CD4-positive, alpha-beta memory T cell (primary cell): ENCODE measurements at regions of chr1 and their contacts with region 1.

Region 1: GRCh38 chr1:212284744-212285684 is at the start of gene PPP2R5A:
- DNase-seq: peak; percentile 98 to 99 (median 99)
- H3K4me3 ChIP-seq: peak within 1 kb of the TSS; percentile 85 to 99
- H3K4me3 Mint-ChIP-seq: peak within 1 kb of the TSS; percentile 99 to 100 (median 100)
- H3K27ac ChIP-seq: peak within 1 kb of the TSS; percentile 92
- H3K27ac Mint-ChIP-seq: peak within 1 kb of the TSS; percentile 94 to 99 (median 99)
- H3K4me1 ChIP-seq: peaks cover 34% of the 10 kb centered on the region
- H3K4me1 Mint-ChIP-seq: peaks cover 26 to 49% (median 37%) of the 10 kb centered on the region in 4 donors
- H3K27me3 ChIP-seq: no peaks in the 10 kb centered on the region
- H3K27me3 Mint-ChIP-seq: no peaks in the 10 kb centered on the region
- total RNA-seq, gene PPP2R5A: 53.8 to 55.0 TPM

Region 2: DNA sequence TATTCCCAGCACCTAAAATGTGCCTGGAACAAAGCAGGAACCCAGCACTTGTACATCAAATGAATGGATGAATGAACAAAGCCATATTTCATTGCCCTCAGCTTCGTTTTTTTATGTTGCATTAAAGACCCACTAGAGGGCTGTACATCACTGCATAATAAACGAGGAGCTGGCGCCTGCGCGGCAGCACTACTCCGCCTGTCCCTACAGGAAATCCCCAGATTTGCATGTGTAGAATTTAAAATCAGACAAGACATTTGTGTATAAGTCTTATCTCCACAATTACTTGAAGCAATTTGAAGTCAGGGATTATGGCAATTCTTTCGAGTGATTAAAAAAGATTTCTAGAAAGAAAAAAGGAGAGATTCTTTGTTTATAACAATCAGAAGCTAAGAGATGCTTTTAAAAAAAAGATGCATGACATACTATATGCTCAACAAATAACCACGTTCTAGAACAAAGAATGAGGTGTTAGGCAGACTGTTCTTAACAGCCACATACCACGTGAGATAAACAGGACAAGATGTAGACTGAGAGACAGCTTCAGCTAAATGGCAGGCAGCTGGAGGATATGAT is 604.2 kb before region 1 on chr1:
- CTCF ChIA-PET with region 1: interaction called, 5 read pairs
- POLR2A ChIA-PET with region 1: interaction called, 15 read pairs
- intact Hi-C with region 1: no loop called
- DNase-seq: peak; percentile 76 to 83 (median 82)
- H3K4me3 ChIP-seq: no peak overlapping the region
- H3K4me3 Mint-ChIP-seq: peak overlapping the region in 4 of 8 donors; percentile 0 to 56 (median 17)
- H3K27ac ChIP-seq: peak overlapping the region; percentile 61
- H3K27ac Mint-ChIP-seq: peak overlapping the region; percentile 77 to 98 (median 92)
- H3K4me1 ChIP-seq: peaks cover 15% of the 10 kb centered on the region
- H3K4me1 Mint-ChIP-seq: peaks cover 9 to 26% (median 12%) of the 10 kb centered on the region in 4 donors
- H3K27me3 ChIP-seq: no peaks in the 10 kb centered on the region
- H3K27me3 Mint-ChIP-seq: no peaks in the 10 kb centered on the region

Region 3: DNA sequence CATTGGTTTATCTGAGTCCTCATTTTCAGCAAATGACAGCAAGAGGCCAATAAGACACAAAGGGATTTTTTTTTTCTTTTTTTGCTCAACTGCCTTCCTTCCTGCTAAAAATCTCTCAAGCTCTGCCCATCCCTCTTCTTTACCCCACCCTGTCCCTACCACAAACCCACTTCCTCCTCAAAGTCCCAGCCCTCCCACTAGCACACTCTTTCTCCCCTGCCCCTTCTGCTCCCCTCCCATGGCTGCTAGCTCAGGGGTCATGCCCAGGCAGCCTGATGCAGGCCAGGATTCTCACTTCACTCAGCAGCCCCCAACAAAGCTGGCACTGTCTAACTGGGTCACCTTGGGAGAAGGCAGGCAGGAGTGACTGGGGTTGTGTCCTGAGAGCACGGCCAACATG is 28.6 kb before region 1 on chr1:
- CTCF ChIA-PET with region 1: interaction called, 6 read pairs
- POLR2A ChIA-PET with region 1: interaction called, 108 read pairs
- intact Hi-C with region 1: loop called (anchors 1 kb)
- DNase-seq: peak; percentile 61 to 77 (median 72)
- H3K4me3 ChIP-seq: no peak overlapping the region
- H3K4me3 Mint-ChIP-seq: peak overlapping the region; percentile 3 to 86 (median 78)
- H3K27ac ChIP-seq: no peak overlapping the region
- H3K27ac Mint-ChIP-seq: peak overlapping the region; percentile 77 to 92 (median 86)
- H3K4me1 ChIP-seq: peaks cover 71% of the 10 kb centered on the region
- H3K4me1 Mint-ChIP-seq: peaks cover 56 to 91% (median 72%) of the 10 kb centered on the region in 4 donors
- H3K27me3 ChIP-seq: no peaks in the 10 kb centered on the region
- H3K27me3 Mint-ChIP-seq: no peaks in the 10 kb centered on the region

Region 4: GRCh38 chr1:212432706-212433576 is 147.9 kb after region 1 on chr1 and contains the start of gene NENF:
- CTCF ChIA-PET with region 1: no interaction called
- POLR2A ChIA-PET with region 1: interaction called, 8 read pairs
- intact Hi-C with region 1: loop called (anchors 1 kb)
- DNase-seq: peak; percentile 68 to 79 (median 72)
- H3K4me3 ChIP-seq: peak within 1 kb of the TSS; percentile 56 to 63
- H3K4me3 Mint-ChIP-seq: peak within 1 kb of the TSS; percentile 77 to 86 (median 83)
- H3K27ac ChIP-seq: peak within 1 kb of the TSS; percentile 29
- H3K27ac Mint-ChIP-seq: peak within 1 kb of the TSS in 6 of 7 donors; percentile 31 to 86 (median 74)
- H3K4me1 ChIP-seq: peaks cover 20% of the 10 kb centered on the region
- H3K4me1 Mint-ChIP-seq: peaks cover 10 to 35% (median 18%) of the 10 kb centered on the region in 4 donors
- H3K27me3 ChIP-seq: no peaks in the 10 kb centered on the region
- H3K27me3 Mint-ChIP-seq: peaks cover 1 to 3% of the 10 kb centered on the region in 2 donors
- total RNA-seq, gene NENF: 18.7 to 21.0 TPM

Region 5: GRCh38 chr1:212608209-212608955 is 323.4 kb after region 1 on chr1 and contains the start of gene ATF3:
- CTCF ChIA-PET with region 1: no interaction called
- POLR2A ChIA-PET with region 1: no interaction called
- intact Hi-C with region 1: loop called (anchors 5 kb)
- DNase-seq: peak; percentile 60 to 94 (median 64)
- H3K4me3 ChIP-seq: peak within 1 kb of the TSS; percentile 43 to 68
- H3K4me3 Mint-ChIP-seq: peak within 1 kb of the TSS; percentile 95 to 97 (median 97)
- H3K27ac ChIP-seq: peak within 1 kb of the TSS; percentile 48
- H3K27ac Mint-ChIP-seq: peak within 1 kb of the TSS; percentile 68 to 96 (median 93)
- H3K4me1 ChIP-seq: peaks cover 29% of the 10 kb centered on the region
- H3K4me1 Mint-ChIP-seq: peaks cover 12 to 43% (median 23%) of the 10 kb centered on the region in 4 donors
- H3K27me3 ChIP-seq: peaks cover 32% of the 10 kb centered on the region
- H3K27me3 Mint-ChIP-seq: peaks cover 38 to 49% of the 10 kb centered on the region in 2 donors
- total RNA-seq, gene ATF3: 2.7 to 3.1 TPM